B cell (primary cell): ENCODE measurements at regions of chr3 and their contacts with region 1.

Region 1: GRCh38 chr3:127574880-127575878 is 15.4 kb downstream of the TPRA1 start:
- DNase-seq: peak; percentile 92
- ATAC-seq: peak; percentile 97
- H3K4me3 ChIP-seq: no peak overlapping the region
- H3K4me3 Mint-ChIP-seq: peak overlapping the region; percentile 52
- H3K27ac ChIP-seq: no peak overlapping the region
- H3K27ac Mint-ChIP-seq: peak overlapping the region; percentile 62
- H3K4me1 ChIP-seq: peaks cover 4 to 10% of the 10 kb centered on the region in 2 donors
- H3K4me1 Mint-ChIP-seq: peaks cover 9% of the 10 kb centered on the region
- H3K27me3 ChIP-seq: no peaks in the 10 kb centered on the region
- H3K27me3 Mint-ChIP-seq: no peaks in the 10 kb centered on the region
- CTCF ChIP-seq: peak; percentile 92

Region 2: DNA sequence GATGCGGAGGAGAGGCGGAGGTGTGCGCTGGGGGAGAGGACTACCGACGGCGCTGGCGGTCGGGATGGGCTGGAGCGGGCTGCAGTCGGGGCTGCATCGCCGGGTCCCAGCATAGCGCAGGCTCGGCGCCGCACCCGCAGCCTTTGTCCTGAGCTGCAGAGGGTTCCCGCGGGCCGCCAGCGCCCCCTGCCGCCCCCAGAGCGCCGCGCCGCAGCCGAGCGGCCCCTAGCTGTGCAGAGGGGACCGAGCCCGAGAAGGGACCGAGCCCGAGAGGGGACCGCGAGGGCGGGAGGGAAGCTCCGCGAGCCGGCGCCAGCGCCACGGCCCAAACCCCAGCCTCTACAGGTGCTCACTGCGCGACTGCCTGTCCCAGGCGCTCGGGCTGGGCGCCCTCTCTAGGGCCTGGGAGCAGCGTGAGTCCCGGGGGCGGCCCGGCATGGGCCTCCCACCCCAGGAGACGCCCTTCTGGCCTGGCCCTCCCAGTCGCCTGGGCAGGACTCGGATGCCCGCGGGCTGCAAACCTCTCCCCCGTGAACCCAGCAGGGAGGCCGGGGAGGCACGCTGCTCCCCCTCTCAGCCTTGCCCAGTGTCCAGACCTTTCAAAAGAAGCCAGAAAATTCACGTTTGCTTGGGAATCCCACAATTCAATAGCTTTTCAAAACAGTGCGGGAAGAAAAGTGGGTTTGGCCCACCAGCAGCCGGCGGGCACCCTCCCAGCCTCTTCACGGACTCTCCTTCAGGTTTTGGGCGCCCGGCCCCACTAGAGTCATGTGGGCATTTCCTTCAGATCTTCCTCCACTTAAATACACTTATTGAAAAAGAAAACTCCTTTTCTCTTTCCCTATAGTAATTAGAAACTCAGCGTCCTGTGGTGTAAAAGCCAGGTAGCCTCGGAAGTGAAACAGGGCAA is 119.4 kb before region 1 on chr3:
- CTCF ChIA-PET with region 1: no interaction called
- POLR2A ChIA-PET with region 1: no interaction called
- intact Hi-C with region 1: no loop called
- DNase-seq: peak; percentile 45
- ATAC-seq: peak; percentile 58
- H3K4me3 ChIP-seq: no peak overlapping the region
- H3K4me3 Mint-ChIP-seq: peak overlapping the region; percentile 18
- H3K27ac ChIP-seq: no peak overlapping the region
- H3K27ac Mint-ChIP-seq: no peak overlapping the region
- H3K4me1 ChIP-seq: peaks cover 3 to 11% of the 10 kb centered on the region in 2 donors
- H3K4me1 Mint-ChIP-seq: peaks cover 6% of the 10 kb centered on the region
- H3K27me3 ChIP-seq: peaks cover 0 to 51% (median 12%) of the 10 kb centered on the region in 4 experiments
- H3K27me3 Mint-ChIP-seq: peaks cover 60% of the 10 kb centered on the region
- CTCF ChIP-seq: peak; percentile 63

Region 3: GRCh38 chr3:127831723-127832172 is 256.6 kb after region 1 on chr3:
- CTCF ChIA-PET with region 1: interaction called, 19 read pairs
- POLR2A ChIA-PET with region 1: no interaction called
- intact Hi-C with region 1: no loop called
- DNase-seq: peak; percentile 50
- ATAC-seq: peak; percentile 40
- H3K4me3 ChIP-seq: no peak overlapping the region
- H3K4me3 Mint-ChIP-seq: no peak overlapping the region
- H3K27ac ChIP-seq: no peak overlapping the region
- H3K27ac Mint-ChIP-seq: no peak overlapping the region
- H3K4me1 ChIP-seq: peaks cover 13 to 28% of the 10 kb centered on the region in 2 donors
- H3K4me1 Mint-ChIP-seq: peaks cover 26% of the 10 kb centered on the region
- H3K27me3 ChIP-seq: no peaks in the 10 kb centered on the region
- H3K27me3 Mint-ChIP-seq: no peaks in the 10 kb centered on the region
- CTCF ChIP-seq: peak; percentile 54

Region 4: GRCh38 chr3:127959846-127960245 is 384.7 kb after region 1 on chr3:
- CTCF ChIA-PET with region 1: interaction called, 10 read pairs
- POLR2A ChIA-PET with region 1: no interaction called
- intact Hi-C with region 1: no loop called
- DNase-seq: peak; percentile 8
- ATAC-seq: no peak
- H3K4me3 ChIP-seq: no peak overlapping the region
- H3K4me3 Mint-ChIP-seq: no peak overlapping the region
- H3K27ac ChIP-seq: no peak overlapping the region
- H3K27ac Mint-ChIP-seq: no peak overlapping the region
- H3K4me1 ChIP-seq: no peaks in the 10 kb centered on the region
- H3K4me1 Mint-ChIP-seq: no peaks in the 10 kb centered on the region
- H3K27me3 ChIP-seq: no peaks in the 10 kb centered on the region
- H3K27me3 Mint-ChIP-seq: peaks cover 3% of the 10 kb centered on the region
- CTCF ChIP-seq: no peak

Region 5: GRCh38 chr3:127970966-127971592 is 395.9 kb after region 1 on chr3:
- CTCF ChIA-PET with region 1: interaction called, 14 read pairs
- POLR2A ChIA-PET with region 1: no interaction called
- intact Hi-C with region 1: no loop called
- DNase-seq: peak; percentile 61
- ATAC-seq: peak; percentile 43
- H3K4me3 ChIP-seq: no peak overlapping the region
- H3K4me3 Mint-ChIP-seq: no peak overlapping the region
- H3K27ac ChIP-seq: no peak overlapping the region
- H3K27ac Mint-ChIP-seq: no peak overlapping the region
- H3K4me1 ChIP-seq: no peaks in the 10 kb centered on the region
- H3K4me1 Mint-ChIP-seq: no peaks in the 10 kb centered on the region
- H3K27me3 ChIP-seq: peaks cover 0 to 2% (median under 1%) of the 10 kb centered on the region in 4 experiments
- H3K27me3 Mint-ChIP-seq: peaks cover 10% of the 10 kb centered on the region
- CTCF ChIP-seq: peak; percentile 65